Body of pancreas (tissue), 4 donors: ENCODE measurements at regions of chr10 and their contacts with region 1.

Region 1: DNA sequence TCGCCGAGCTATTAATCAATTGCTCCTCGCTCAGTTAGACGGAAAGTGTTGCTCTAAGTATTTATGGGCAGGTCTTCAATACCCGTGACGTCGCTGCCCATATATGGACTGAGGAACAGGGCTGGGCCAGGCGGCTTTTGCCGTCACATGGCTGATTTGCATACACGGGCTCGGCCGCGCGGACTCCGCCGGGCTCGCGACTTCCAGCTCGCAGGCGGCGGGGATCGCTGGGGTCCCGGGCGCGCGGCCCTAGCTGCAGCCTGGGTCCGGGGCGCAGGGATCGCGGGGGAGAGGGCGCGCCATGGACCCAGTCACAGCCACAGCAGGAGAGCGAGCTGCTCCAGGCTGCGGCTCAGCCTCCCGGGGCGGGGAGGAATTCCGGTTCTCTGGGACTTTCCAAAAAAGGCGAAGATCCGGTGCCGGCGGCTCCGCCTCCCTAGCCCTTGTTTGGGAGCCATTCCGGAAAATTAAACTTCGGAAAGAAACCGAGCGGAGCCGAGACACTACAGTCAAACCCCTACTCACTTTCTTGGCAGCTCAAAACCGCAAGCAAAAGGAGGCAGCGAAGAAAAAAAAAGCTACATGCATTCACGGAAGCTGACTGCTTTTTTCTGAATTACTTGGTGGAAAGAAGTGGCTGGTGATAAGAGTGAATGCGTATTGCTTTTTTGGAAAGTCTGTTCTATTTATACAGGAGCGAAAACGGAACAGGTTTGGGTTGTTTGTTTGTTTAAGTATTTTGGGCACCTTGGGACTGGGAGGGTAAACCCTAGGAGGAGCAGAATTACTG is at the start of gene EGR2:
- DNase-seq: peak; percentile 91 to 96 (median 93)
- ATAC-seq: peak; percentile 85
- H3K4me3 ChIP-seq: peak within 1 kb of the TSS; percentile 65 to 69
- H3K27ac ChIP-seq: peak within 1 kb of the TSS; percentile 80 to 95 (median 90)
- H3K4me1 ChIP-seq: peaks cover 30% of the 10 kb centered on the region
- H3K27me3 ChIP-seq: peaks cover 0 to 21% of the 10 kb centered on the region in 2 donors
- CTCF ChIP-seq: no peak
- POLR2A ChIP-seq: peak; percentile 2 to 54 (median 49)
- total RNA-seq, gene EGR2: 4.2 to 5.9 TPM

Region 2: DNA sequence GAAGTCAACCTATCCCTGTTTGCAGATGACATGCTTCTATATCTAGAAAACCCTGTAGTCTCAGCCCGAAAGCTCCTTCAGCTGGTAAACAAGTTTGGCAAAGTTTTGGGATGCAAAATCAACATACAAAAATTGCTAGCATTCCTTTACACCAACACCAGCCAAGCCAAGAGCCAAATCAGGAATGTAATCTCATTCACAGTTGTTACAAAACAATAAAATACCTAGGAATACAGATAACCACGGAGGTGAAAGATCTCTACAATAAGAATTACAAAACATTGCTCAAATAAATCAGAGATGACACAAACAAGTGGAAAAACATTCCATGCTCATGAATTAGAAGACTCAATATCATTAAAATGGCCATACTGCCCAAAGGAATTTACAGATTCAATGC is 492.8 kb before region 1 on chr10:
- intact Hi-C with region 1: no loop called
- DNase-seq: no peak
- ATAC-seq: no peak
- H3K4me3 ChIP-seq: no peak overlapping the region
- H3K27ac ChIP-seq: no peak overlapping the region
- H3K4me1 ChIP-seq: no peaks in the 10 kb centered on the region
- H3K27me3 ChIP-seq: no peaks in the 10 kb centered on the region
- CTCF ChIP-seq: no peak
- POLR2A ChIP-seq: no peak

Region 3: GRCh38 chr10:63133056-63133820 is 316.7 kb after region 1 on chr10 and contains the start of gene NRBF2:
- intact Hi-C with region 1: loop called (anchors 10 kb)
- DNase-seq: peak; percentile 98 to 99 (median 99)
- ATAC-seq: peak; percentile 99
- H3K4me3 ChIP-seq: peak within 1 kb of the TSS; percentile 80 to 89
- H3K27ac ChIP-seq: peak within 1 kb of the TSS; percentile 84 to 96 (median 90)
- H3K4me1 ChIP-seq: peaks cover 28% of the 10 kb centered on the region
- H3K27me3 ChIP-seq: no peaks in the 10 kb centered on the region
- CTCF ChIP-seq: peak in 3 of 7 experiments; percentile 3 to 24 (median 6)
- POLR2A ChIP-seq: peak; percentile 90 to 98 (median 98)
- total RNA-seq, gene NRBF2: 7.5 to 9.2 TPM